PC-9 (cell line): ENCODE measurements at regions of chr5 and their contacts with region 1.

Region 1: GRCh38 chr5:127746756-127747155 is 43.6 kb downstream of the CCDC192 start:
- DNase-seq: peak in 1 of 2 experiments; percentile 54
- H3K4me3 ChIP-seq: no peak overlapping the region
- H3K27ac ChIP-seq: no peak overlapping the region
- H3K4me1 ChIP-seq: no peaks in the 10 kb centered on the region
- H3K27me3 ChIP-seq: no peaks in the 10 kb centered on the region
- CTCF ChIP-seq: peak; percentile 58

Region 2: GRCh38 chr5:127697894-127698600 is 48.7 kb before region 1 on chr5:
- CTCF ChIA-PET with region 1: no interaction called
- POLR2A ChIA-PET with region 1: no interaction called
- intact Hi-C with region 1: no loop called
- DNase-seq: peak in 1 of 2 experiments; percentile 83
- H3K4me3 ChIP-seq: no peak overlapping the region
- H3K27ac ChIP-seq: no peak overlapping the region
- H3K4me1 ChIP-seq: no peaks in the 10 kb centered on the region
- H3K27me3 ChIP-seq: no peaks in the 10 kb centered on the region
- CTCF ChIP-seq: no peak

Region 3: DNA sequence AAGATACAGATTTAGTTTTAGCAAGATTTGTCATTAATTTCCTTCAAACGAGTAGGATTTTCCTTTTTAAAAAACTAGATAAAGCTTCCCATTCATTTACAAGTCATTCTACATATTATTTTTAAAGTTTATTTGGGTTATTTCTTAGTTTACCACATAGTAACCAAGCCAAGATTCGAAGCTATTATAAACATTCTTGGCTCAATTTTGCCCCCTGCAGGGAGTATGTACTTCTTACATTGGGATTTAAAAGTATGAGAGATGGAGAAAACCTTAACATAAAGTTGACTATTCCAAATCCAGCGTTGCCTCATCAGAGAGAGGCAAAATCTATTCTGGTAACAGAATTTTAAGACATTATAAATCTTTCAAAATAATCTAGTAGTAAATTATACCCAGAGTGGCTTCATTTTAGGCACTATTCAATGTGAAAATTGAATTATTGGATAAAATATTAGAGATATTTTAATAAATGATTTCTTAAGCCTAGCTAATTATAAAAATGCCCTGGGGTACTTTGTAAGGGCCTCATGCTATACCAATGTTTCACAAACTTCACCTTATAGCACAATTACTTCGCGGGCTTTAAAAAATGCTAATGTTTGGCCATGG is 752.2 kb after region 1 on chr5:
- CTCF ChIA-PET with region 1: no interaction called
- POLR2A ChIA-PET with region 1: no interaction called
- intact Hi-C with region 1: loop called (anchors 5 kb)
- DNase-seq: no peak
- H3K4me3 ChIP-seq: no peak overlapping the region
- H3K27ac ChIP-seq: no peak overlapping the region
- H3K4me1 ChIP-seq: no peaks in the 10 kb centered on the region
- H3K27me3 ChIP-seq: no peaks in the 10 kb centered on the region
- CTCF ChIP-seq: peak; percentile 67

Region 4: GRCh38 chr5:128844354-128844923 is 1097.7 kb after region 1 on chr5:
- CTCF ChIA-PET with region 1: no interaction called
- POLR2A ChIA-PET with region 1: no interaction called
- intact Hi-C with region 1: loop called (anchors 5 kb)
- DNase-seq: no peak
- H3K4me3 ChIP-seq: no peak overlapping the region
- H3K27ac ChIP-seq: no peak overlapping the region
- H3K4me1 ChIP-seq: no peaks in the 10 kb centered on the region
- H3K27me3 ChIP-seq: no peaks in the 10 kb centered on the region
- CTCF ChIP-seq: peak; percentile 65; the same call in 1 of the 2 replicates